ENCODE measurements at regions of chrX and their contacts with region 1.

Region 1: DNA sequence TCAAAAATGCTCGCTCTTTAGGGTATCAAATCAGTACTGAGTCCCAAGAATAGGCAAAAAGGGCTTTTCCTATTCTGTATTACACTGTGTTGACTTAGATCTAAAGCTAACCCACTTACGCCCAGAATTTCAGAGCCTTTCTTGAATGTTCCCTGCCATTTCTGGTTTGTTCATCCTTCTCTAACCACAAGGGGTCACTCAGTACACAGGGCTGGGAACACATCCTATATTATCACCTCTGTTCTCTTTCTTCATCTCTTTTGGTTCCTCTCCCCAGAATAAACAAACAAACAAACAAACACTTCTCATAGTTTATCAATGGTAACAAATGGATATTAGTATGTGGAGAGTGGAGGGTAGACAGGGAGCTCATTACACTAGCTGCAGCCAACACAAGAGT is 25.5 kb upstream of the MORC4 start:
- DNase-seq: peak; percentile 50
- H3K4me3 Mint-ChIP-seq: no peak overlapping the region
- H3K27ac Mint-ChIP-seq: no peak overlapping the region
- H3K4me1 Mint-ChIP-seq: no peaks in the 10 kb centered on the region
- H3K27me3 Mint-ChIP-seq: peaks cover 71% of the 10 kb centered on the region
- CTCF ChIP-seq: peak; percentile 58

Region 2: GRCh38 chrX:105515561-105515960 is 1510.0 kb before region 1 on chrX:
- CTCF ChIA-PET with region 1: no interaction called
- POLR2A ChIA-PET with region 1: no interaction called
- intact Hi-C with region 1: no loop called
- DNase-seq: peak; percentile 2
- H3K4me3 Mint-ChIP-seq: no peak overlapping the region
- H3K27ac Mint-ChIP-seq: no peak overlapping the region
- H3K4me1 Mint-ChIP-seq: no peaks in the 10 kb centered on the region
- H3K27me3 Mint-ChIP-seq: peaks cover 49% of the 10 kb centered on the region
- CTCF ChIP-seq: no peak

Region 3: DNA sequence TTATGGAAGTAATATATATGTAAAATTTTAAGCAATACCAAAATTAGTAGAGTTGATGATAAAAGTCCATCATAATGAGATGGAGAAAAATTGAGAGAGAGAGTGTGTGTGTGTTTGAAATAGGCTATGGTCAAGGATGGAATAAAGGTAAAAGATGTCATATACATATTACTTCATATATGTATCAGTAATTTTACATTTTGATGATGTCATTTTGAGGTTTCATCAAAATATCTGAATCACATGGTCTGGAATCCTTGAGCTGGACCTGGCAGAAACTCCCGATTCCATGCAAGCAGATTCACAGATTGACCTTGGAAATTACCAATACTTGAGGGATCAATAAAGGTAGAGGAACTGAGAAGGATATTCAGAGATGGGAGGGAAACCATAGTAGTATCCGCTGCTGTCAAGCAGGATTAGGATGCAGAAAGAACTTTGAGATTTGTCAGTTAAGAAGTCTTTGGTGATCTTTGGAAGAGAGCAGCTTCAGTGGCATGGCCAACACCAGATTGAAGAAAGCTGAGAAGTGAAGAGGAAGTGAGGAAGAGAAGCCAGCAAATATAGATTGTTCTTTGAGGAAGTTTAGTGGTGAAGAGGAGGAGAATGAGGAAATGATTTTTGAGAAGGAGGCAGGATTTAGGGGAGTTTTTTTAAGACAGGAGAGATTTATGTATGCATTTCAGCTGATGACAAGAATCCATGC is 202.4 kb after region 1 on chrX:
- CTCF ChIA-PET with region 1: no interaction called
- POLR2A ChIA-PET with region 1: no interaction called
- intact Hi-C with region 1: no loop called
- DNase-seq: no peak
- H3K4me3 Mint-ChIP-seq: no peak overlapping the region
- H3K27ac Mint-ChIP-seq: no peak overlapping the region
- H3K4me1 Mint-ChIP-seq: no peaks in the 10 kb centered on the region
- H3K27me3 Mint-ChIP-seq: peaks cover 46% of the 10 kb centered on the region
- CTCF ChIP-seq: no peak

Region 4: GRCh38 chrX:107290019-107290418 is 264.5 kb after region 1 on chrX:
- CTCF ChIA-PET with region 1: no interaction called
- POLR2A ChIA-PET with region 1: no interaction called
- intact Hi-C with region 1: loop called (anchors 5 kb)
- DNase-seq: peak; percentile 4
- H3K4me3 Mint-ChIP-seq: no peak overlapping the region
- H3K27ac Mint-ChIP-seq: no peak overlapping the region
- H3K4me1 Mint-ChIP-seq: no peaks in the 10 kb centered on the region
- H3K27me3 Mint-ChIP-seq: peaks cover 50% of the 10 kb centered on the region
- CTCF ChIP-seq: no peak

Region 5: DNA sequence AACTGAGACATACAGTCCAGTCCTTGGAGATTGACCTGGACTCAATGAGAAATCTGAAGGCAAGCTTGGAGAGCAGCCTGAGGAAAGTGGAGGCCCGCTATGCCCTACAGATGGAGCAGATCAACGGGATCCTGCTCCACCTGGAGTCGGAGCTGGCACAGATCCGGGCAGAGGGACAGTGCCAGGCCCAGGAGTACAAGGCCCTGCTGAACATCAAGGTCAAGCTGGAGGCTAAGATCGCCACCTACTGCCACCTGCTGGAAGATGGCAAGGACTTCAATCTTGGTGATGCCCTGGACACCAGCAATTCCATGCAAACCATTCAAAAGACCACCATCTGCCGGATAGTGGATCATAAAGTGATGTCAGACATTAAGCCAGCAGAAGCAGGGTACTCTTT is 403.5 kb after region 1 on chrX:
- CTCF ChIA-PET with region 1: interaction called, 5 read pairs
- POLR2A ChIA-PET with region 1: no interaction called
- intact Hi-C with region 1: loop called (anchors 1 kb)
- DNase-seq: peak; percentile 62
- H3K4me3 Mint-ChIP-seq: no peak overlapping the region
- H3K27ac Mint-ChIP-seq: no peak overlapping the region
- H3K4me1 Mint-ChIP-seq: no peaks in the 10 kb centered on the region
- H3K27me3 Mint-ChIP-seq: peaks cover 62% of the 10 kb centered on the region
- CTCF ChIP-seq: peak; percentile 37

Region 6: GRCh38 chrX:107894038-107894437 is 868.5 kb after region 1 on chrX:
- CTCF ChIA-PET with region 1: interaction called, 4 read pairs
- POLR2A ChIA-PET with region 1: no interaction called
- intact Hi-C with region 1: loop called (anchors 10 kb)
- DNase-seq: peak; percentile 71
- H3K4me3 Mint-ChIP-seq: no peak overlapping the region
- H3K27ac Mint-ChIP-seq: no peak overlapping the region
- H3K4me1 Mint-ChIP-seq: no peaks in the 10 kb centered on the region
- H3K27me3 Mint-ChIP-seq: peaks cover 59% of the 10 kb centered on the region
- CTCF ChIP-seq: peak; percentile 46

Region 7: DNA sequence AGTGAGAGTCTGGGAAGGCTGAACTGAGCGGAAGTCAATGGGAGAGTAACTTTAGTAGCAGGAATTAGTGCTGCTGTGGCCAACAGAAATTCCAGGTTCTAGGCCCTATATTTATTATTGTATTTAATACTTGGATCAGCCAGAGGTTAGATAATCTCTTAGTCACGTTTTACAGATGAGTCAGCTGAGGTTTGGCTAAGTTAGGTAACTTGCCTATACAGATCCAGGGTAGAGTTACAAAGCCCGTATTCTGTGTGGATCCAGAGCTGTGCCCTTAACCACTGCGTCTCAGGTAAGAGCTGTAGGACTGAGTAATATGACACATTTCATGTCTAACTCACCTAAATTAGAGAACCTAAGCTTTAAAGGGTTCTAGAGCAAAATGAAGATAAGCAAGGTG is 1045.3 kb after region 1 on chrX:
- CTCF ChIA-PET with region 1: no interaction called
- POLR2A ChIA-PET with region 1: no interaction called
- intact Hi-C with region 1: loop called (anchors 10 kb)
- DNase-seq: peak; percentile 77
- H3K4me3 Mint-ChIP-seq: no peak overlapping the region
- H3K27ac Mint-ChIP-seq: no peak overlapping the region
- H3K4me1 Mint-ChIP-seq: peaks cover 15% of the 10 kb centered on the region
- H3K27me3 Mint-ChIP-seq: peaks cover 71% of the 10 kb centered on the region
- CTCF ChIP-seq: no peak